Mammary epithelial cell (primary cell): ENCODE measurements at regions of chr18 and their contacts with region 1.

Region 1: DNA sequence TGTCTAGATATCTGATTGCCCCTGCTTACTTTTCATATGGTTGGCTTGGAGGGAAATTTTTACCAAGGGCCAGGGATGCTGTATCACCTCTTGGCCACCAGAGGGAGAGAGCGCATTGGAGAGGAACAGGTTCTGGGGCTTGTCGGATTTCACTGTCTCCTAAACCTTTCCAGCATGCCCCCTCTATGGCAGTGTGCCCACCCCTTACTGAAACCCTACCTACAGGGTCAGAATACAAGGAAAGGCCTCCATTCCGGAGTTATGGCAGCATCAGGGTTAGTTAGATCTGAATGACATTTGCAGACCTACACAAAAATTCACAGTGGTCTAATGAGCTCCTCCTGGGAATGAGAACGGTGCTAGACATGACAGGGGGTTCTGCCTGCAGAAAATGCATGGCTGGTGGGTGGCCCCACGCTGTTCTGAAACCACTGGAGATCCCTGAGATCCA is 5.8 kb downstream of the SLC14A2 start:
- DNase-seq: peak; percentile 16
- H3K4me3 ChIP-seq: no peak overlapping the region
- H3K27ac ChIP-seq: no peak overlapping the region
- H3K4me1 ChIP-seq: peaks cover 25% of the 10 kb centered on the region
- H3K27me3 ChIP-seq: no peaks in the 10 kb centered on the region
- CTCF ChIP-seq: peak; percentile 96 to 97

Region 2: DNA sequence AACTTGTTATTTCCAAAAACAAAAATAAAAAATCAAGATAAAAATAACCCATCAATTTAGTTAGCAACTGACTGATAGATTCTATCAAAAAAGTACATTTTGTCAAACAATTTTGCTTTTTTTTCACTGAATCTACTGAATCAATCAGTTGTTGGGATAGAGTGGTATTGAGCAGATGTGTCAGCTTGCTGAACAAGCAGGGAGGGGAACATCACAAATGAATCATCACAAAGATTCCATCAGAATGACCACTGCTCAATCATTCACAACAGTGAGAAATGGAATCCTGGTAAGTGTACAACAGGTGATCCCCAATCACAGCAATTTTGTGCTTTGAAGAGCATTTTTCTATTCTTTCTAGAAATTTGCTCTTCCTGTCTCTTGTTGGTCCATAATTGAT is 18.2 kb before region 1 on chr18:
- CTCF ChIA-PET with region 1: no interaction called
- dilution Hi-C with region 1: no loop called
- in situ Hi-C with region 1: no loop called
- intact Hi-C with region 1: loop called (anchors 1 kb)
- DNase-seq: peak; percentile 54
- H3K4me3 ChIP-seq: no peak overlapping the region
- H3K27ac ChIP-seq: no peak overlapping the region
- H3K4me1 ChIP-seq: no peaks in the 10 kb centered on the region
- H3K27me3 ChIP-seq: no peaks in the 10 kb centered on the region
- CTCF ChIP-seq: no peak

Region 3: DNA sequence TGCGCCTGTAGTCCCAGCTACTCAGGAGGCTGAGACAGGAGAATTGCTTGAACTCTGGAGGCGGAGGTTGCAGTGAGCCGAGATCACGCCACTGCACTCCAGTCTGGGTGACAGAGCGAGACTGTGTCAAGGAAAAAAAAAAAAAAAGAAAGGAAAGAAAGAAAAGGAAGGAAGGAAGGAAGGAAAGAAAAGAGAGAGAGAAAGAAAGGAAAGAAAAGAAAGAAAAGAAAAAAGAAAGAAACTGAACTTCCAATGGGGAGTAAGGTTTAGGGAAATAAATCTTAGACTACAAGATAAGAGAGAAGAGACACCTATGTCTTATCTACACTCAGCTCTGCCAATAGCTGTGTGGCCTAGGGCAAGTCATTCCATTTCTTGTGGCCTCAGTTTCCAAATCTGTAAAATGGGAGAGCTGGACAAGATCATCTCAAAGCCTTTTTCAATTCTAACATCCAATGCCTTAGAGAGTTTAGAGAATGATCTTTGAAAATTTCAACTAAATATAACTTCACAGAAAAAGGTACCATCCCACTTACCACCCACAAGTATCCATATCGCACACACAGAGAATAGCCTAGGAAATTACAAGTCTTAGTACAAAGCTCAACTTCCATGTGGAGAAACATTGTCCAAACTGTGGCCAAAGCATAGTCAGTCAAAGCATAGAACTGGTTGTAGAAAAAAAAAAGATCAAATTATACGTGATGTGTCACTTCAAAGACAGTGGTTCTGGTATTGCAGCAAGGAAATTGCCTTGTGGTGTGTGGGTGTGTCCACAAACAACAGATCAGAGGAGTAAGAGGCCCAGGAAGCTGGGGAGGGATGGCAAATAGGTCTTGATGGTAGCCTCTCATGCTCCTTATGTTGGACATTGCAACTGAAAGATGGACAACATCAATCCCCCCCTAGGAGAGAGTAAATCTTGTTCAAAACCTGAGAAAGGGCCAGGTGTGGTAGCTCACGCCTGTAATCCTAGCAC is 36.6 kb after region 1 on chr18:
- CTCF ChIA-PET with region 1: interaction called, 3 read pairs
- dilution Hi-C with region 1: no loop called
- in situ Hi-C with region 1: no loop called
- intact Hi-C with region 1: loop called (anchors 1 kb)
- DNase-seq: peak; percentile 65
- H3K4me3 ChIP-seq: no peak overlapping the region
- H3K27ac ChIP-seq: no peak overlapping the region
- H3K4me1 ChIP-seq: peaks cover 11% of the 10 kb centered on the region
- H3K27me3 ChIP-seq: no peaks in the 10 kb centered on the region
- CTCF ChIP-seq: no peak